ENCODE measurements at regions of chr2 and their contacts with region 1.

Region 1: GRCh38 chr2:230798769-230799399 is 65.9 kb upstream of the ITM2C start:
- DNase-seq: no peak
- ATAC-seq: peak in 1 of 2 donors; percentile 31

Region 2: DNA sequence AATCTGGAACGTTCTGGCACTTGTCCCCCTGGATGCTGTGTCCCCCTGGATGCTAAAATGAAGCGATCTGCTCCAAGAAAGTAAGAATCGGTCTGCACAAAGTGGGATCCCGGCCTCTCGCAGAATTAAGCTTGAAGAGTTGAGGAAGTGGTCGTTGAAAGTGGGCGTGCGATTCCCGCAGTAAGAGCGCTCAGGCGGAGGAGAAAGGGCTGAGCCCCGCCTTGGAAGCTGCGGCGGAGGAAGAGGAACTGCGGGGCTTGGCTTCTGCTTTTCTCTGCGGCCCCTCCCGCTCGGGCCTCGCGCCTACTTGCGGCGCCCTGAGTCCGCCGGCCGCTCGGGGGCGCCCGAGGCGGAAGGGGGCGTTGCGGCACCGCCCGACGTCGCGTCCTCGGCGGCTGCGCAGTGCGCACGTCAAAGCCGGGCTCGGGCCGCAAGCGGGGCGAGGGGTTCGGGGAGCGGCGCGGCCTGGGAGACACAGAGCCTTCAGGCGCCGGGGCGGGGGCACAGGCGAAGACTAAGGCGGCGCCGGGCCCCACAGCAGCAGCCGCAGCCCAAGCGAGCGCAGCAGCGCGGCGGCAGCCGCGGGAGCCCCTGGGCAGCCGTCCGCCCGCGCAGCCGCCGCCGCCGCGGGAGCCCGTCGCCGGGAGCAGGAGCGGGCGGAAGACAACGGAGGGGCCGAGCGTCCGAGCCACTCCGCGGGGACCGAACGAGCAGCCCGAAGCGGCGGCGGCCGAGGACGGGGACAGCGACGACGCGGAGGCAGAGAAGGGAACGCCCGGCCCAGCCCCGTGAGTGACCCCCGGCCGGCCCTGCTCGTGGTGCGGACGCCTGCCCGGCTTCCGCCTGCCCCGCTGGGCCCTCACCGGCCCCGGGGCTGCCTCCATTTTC is 86.2 kb before region 1 on chr2 and contains the start of gene CAB39:
- intact Hi-C with region 1: loop called (anchors 5 kb)
- DNase-seq: peak; percentile 91
- ATAC-seq: peak; percentile 92 to 96
- total RNA-seq, gene CAB39: 85.5 to 87.8 TPM

Region 3: GRCh38 chr2:230814616-230815015 is 15.7 kb after region 1 on chr2:
- intact Hi-C with region 1: no loop called
- DNase-seq: no peak
- ATAC-seq: no peak

Region 4: DNA sequence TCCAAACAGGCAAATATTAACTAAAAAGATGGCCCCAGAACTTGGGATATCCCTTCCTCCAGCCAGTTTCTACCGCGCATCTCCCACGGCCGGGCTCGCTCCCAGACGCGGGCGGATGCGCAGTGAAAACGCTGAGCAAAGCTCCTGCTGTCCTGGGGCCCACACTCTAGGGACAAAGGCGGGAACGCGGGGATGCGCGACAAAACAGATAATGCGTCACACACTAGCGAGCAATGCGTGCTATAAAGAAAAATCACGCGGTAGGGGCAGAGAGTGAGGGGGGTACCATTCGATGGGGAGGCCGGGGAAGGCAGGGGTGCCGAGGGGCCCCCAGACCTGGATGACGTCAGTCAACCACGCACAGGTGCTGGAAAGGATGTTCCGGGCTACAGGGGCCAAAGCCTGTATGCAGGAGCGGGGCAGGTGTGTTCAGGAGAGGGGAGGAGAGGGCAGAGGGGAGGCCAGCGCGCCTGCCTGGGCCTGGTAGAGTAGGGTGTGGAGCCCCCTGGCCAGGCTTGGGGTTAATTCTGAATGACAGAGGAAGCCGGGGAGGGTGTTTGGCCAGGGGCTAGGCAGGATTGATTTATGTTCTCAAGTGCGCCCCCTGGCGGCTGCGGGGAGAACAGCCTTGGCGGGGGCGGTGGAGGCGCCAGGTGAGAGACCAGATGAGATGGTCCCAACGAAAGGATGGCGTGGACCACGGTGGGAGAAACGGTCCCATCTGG is 50.9 kb after region 1 on chr2:
- intact Hi-C with region 1: no loop called
- DNase-seq: no peak
- ATAC-seq: peak; percentile 33 to 34